ENCODE measurements at regions of chr6 and their contacts with region 1.

Region 1: GRCh38 chr6:42661540-42662153 is 60.8 kb downstream of the PRPH2 start:
- DNase-seq: peak; percentile 77
- H3K4me3 ChIP-seq: no peak overlapping the region
- H3K27ac ChIP-seq: no peak overlapping the region
- H3K4me1 ChIP-seq: no peaks in the 10 kb centered on the region
- H3K27me3 ChIP-seq: no peaks in the 10 kb centered on the region
- CTCF ChIP-seq: peak; percentile 71 to 96 (median 88)
- POLR2A ChIP-seq: no peak

Region 2: GRCh38 chr6:42726485-42727086 is 64.9 kb after region 1 on chr6:
- intact Hi-C with region 1: loop called (anchors 1 kb)
- DNase-seq: peak; percentile 80
- H3K4me3 ChIP-seq: peak overlapping the region; percentile 13 to 34
- H3K27ac ChIP-seq: peak overlapping the region; percentile 42 to 57
- H3K4me1 ChIP-seq: no peaks in the 10 kb centered on the region
- H3K27me3 ChIP-seq: no peaks in the 10 kb centered on the region
- CTCF ChIP-seq: peak; percentile 79 to 94 (median 93)
- POLR2A ChIP-seq: no peak